ENCODE measurements at regions of chr10 and their contacts with region 1.

Region 1: DNA sequence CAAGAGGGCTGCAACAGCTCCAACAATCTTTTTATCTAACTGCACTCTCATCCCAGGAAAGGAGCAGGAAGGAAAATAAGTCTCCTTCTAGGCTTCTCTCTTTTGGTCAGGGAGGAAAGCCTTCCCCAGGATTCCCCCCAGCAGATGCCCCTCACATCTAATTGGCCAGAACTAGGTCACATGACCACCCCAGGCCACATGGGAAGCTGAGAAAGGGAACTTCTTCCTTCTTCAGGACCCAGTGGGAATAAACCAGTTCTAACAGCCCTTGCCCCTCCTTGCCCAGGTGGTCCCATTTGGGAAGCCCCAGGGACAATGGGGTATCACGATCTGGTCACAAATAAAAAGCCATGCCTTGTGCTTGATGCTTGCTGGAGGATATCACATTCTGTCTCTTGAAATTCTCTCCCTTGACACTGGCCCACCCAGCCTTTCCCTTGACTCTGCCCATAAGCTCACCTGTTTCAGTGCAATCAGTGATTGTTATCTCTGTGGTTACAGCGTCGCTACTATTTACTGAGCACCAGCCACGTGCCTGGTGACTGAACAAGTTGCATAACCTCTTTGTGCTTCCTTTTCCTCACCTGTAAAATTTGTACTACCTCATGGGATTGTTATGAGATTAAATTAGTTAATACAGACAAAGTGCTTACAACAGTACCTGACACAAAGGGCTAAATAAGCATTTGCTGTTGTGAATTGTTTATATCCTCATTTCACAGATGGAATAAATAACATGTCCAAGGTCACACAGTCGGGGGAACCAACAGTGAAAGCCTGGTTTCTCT is 9.0 kb upstream of the TACR2 start:
- DNase-seq: no peak
- ATAC-seq: no peak
- H3K4me3 ChIP-seq: no peak overlapping the region
- H3K27ac ChIP-seq: peak overlapping the region; percentile 45 to 50
- H3K4me1 ChIP-seq: peaks cover 20% of the 10 kb centered on the region
- CTCF ChIP-seq: no peak
- EP300 ChIP-seq: no peak
- POLR2A ChIP-seq: no peak
- RAD21 ChIP-seq: no peak

Region 2: DNA sequence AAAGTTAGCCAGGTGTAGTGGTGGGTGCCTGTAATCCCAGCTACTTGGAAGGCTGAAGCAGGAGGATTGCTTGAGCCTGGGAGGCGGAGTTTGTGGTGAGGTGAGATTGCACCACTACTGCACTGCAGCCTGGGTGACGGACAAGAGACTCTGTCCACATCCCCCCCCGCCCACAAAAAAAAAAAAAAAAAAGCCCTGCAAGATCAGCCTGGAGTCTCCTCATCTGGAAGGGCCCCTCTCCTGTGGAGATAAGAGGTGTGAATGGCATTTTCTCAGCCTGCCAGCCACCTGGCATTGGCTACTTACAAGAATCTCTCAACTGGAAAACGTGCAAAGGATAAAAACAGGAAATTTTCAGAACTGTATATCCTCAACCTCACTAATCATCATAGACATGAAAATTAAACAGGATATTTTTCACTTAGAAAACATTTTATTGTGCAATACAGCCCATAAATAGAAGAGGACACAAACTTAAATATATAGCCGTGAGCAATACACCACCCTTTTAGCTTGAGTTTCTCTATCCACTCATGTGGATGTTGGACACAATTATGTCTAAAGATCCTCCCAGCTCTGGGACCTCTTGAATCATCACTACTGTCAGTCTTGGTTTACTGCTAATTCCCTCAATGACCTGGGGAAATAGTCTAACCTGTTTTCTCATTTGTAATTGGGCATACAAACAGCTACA is 14.3 kb after region 1 on chr10:
- CTCF ChIA-PET with region 1: interaction called, 22 read pairs
- POLR2A ChIA-PET with region 1: no interaction called
- DNase-seq: peak in 1 of 2 experiments; percentile 59
- ATAC-seq: peak in 1 of 2 experiments; percentile 68; a peak in 3 of 6 replicates
- H3K4me3 ChIP-seq: no peak overlapping the region
- H3K27ac ChIP-seq: peak overlapping the region; percentile 87 to 92
- H3K4me1 ChIP-seq: peaks cover 45% of the 10 kb centered on the region
- CTCF ChIP-seq: no peak
- EP300 ChIP-seq: no peak
- POLR2A ChIP-seq: no peak
- RAD21 ChIP-seq: no peak

Region 3: DNA sequence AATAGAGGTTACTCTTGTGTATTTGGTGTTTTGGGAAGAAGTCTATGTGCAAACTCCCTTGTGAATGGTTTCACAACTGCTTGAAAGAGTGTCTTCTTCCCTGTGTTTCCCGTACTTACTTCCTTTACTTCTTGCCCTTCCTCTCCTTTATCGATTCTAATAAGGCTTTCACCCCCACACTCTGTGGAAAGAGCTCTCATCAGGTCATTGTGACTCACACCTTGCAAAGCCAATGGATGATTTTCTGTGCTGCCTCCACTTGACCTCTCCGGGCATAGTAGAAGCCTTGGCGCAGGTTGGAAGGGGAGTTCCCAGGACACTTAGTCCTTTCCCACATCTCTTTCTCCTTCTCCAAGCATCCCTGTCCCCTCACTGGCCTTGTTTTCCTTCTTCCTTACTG is 19.3 kb after region 1 on chr10:
- CTCF ChIA-PET with region 1: interaction called, 57 read pairs
- POLR2A ChIA-PET with region 1: no interaction called
- DNase-seq: no peak
- ATAC-seq: no peak
- H3K4me3 ChIP-seq: no peak overlapping the region
- H3K27ac ChIP-seq: peak overlapping the region; percentile 92 to 94
- H3K4me1 ChIP-seq: peaks cover 65% of the 10 kb centered on the region
- CTCF ChIP-seq: no peak
- EP300 ChIP-seq: no peak
- POLR2A ChIP-seq: no peak
- RAD21 ChIP-seq: no peak

Region 4: DNA sequence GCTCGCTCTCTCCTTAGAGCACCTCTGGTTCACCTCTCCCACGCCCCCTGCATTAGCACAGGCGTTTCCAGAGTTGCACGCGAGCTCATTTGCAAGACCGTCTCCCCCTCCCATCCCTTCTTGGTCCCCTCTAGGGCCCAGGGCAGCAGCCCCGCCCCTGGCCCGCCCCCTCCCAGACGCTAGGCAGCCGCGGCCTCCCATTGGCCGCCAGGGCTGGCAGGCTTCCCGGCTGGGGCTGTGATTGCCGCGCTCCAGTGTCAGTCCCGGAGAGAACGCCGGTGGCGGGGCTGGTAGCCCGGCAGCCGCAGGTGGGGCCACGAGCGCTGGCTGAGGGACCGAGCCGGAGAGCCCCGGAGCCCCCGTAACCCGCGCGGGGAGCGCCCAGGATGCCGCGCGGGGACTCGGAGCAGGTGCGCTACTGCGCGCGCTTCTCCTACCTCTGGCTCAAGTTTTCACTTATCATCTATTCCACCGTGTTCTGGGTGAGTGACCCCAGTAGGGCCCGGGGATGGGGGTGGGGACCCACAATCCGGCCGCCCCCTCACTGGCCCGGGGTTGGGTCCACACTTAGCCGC is 25.6 kb after region 1 on chr10 and contains the start of gene TSPAN15:
- CTCF ChIA-PET with region 1: interaction called, 57 read pairs
- POLR2A ChIA-PET with region 1: no interaction called
- DNase-seq: peak; percentile 78 to 94
- ATAC-seq: peak; percentile 84 to 85
- H3K4me3 ChIP-seq: peak within 1 kb of the TSS; percentile 78
- H3K27ac ChIP-seq: peak within 1 kb of the TSS; percentile 92 to 94
- H3K4me1 ChIP-seq: peaks cover 74% of the 10 kb centered on the region
- CTCF ChIP-seq: no peak
- EP300 ChIP-seq: no peak
- POLR2A ChIP-seq: peak; percentile 39
- RAD21 ChIP-seq: no peak
- polyA plus RNA-seq, gene TSPAN15: 89.0 and 89.6 TPM in 2 replicates

Region 5: DNA sequence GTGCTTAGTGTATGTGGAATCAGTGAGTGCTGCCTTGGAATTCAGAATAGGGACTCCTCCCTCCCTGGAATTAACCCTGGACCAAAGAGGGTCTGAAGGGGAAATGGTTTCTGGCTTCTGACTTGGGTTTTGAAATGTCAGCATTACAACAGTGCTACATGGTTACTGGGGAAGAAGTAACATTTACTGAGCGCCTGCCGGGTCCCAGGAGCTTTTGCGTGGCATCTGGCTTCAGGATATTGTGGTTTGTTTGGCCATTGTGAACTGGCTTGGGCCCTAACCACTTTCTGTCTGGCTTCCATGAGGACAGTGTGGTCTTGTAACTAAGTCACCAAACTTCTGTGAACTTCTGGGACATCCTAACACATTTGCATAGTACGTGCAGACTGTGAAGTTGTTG is 46.8 kb after region 1 on chr10:
- CTCF ChIA-PET with region 1: interaction called, 10 read pairs
- POLR2A ChIA-PET with region 1: no interaction called
- DNase-seq: no peak
- ATAC-seq: no peak
- H3K4me3 ChIP-seq: no peak overlapping the region
- H3K27ac ChIP-seq: peak overlapping the region in 1 of 2 experiments; percentile 3; a peak in 2 of 6 replicates
- H3K4me1 ChIP-seq: peaks cover 61% of the 10 kb centered on the region
- CTCF ChIP-seq: no peak
- EP300 ChIP-seq: no peak
- POLR2A ChIP-seq: no peak
- RAD21 ChIP-seq: no peak